Calu3 (cell line): ENCODE measurements at regions of chr16 and their contacts with region 1.

Region 1: DNA sequence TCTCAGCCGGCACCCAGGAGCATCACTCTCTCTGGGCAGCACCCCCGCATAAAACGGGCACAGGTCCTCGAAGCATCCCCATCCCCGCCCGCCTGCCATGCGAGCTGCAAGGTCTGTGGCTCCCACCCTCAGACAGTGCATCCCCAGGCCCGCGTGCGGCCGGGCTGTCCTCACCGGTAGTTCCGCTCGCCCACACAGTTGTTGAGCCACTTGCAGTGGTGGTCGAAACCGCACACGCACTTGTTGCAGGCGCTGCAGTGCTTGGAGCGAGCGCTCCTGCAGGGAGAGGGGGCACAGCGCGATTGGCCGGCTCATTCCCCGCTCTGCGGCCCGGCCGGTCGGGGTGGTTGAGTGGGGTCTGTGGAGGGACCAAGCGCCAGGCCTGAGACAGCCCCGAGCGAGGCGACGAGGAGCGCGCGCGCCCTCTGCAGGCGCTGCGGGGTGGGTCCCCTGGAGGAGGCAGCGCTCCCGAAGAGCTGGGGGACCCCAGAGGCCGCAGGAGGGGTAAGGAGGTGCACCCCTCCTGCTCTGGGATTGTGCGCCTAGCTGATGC is 6.0 kb upstream of the TPPP3 start:
- DNase-seq: peak; percentile 83
- H3K4me3 Mint-ChIP-seq: no peak overlapping the region
- H3K27ac Mint-ChIP-seq: no peak overlapping the region
- H3K4me1 Mint-ChIP-seq: peaks cover 35% of the 10 kb centered on the region
- H3K27me3 Mint-ChIP-seq: no peaks in the 10 kb centered on the region
- CTCF ChIP-seq: peak; percentile 94

Region 2: DNA sequence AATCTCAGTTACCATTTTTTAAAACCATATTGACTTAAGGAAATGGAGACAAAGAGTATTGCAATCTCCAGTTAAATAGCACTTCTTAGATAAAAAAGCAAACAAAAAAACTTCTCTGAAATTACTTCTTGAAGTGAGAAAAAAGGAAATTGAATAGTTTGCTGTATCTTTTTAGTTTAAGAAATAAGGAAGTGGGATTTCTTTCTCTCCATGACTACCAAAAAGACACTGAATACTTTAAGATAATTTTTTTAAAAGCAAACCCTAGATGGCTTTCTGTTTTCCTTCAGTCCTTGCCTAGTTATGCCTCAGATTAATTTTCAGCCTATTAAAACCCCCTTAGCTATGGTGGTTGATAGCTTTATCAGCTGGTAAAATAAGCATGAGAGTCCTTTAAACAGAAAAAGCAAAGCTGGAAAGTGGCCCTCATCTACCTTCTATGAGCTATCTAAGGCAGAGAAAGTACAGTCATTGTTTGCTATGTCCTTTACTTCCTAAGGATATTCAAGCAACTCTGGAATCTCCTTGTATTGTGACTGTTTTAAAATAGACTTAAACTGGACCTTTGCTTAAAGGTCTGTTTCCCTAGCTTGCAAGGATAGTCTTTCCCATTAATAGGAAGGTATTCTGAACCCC is 34.5 kb before region 1 on chr16:
- CTCF ChIA-PET with region 1: no interaction called
- intact Hi-C with region 1: loop called (anchors 5 kb)
- DNase-seq: no peak
- H3K4me3 Mint-ChIP-seq: no peak overlapping the region
- H3K27ac Mint-ChIP-seq: peak overlapping the region; percentile 78
- H3K4me1 Mint-ChIP-seq: peaks cover 43% of the 10 kb centered on the region
- H3K27me3 Mint-ChIP-seq: no peaks in the 10 kb centered on the region
- CTCF ChIP-seq: no peak

Region 3: DNA sequence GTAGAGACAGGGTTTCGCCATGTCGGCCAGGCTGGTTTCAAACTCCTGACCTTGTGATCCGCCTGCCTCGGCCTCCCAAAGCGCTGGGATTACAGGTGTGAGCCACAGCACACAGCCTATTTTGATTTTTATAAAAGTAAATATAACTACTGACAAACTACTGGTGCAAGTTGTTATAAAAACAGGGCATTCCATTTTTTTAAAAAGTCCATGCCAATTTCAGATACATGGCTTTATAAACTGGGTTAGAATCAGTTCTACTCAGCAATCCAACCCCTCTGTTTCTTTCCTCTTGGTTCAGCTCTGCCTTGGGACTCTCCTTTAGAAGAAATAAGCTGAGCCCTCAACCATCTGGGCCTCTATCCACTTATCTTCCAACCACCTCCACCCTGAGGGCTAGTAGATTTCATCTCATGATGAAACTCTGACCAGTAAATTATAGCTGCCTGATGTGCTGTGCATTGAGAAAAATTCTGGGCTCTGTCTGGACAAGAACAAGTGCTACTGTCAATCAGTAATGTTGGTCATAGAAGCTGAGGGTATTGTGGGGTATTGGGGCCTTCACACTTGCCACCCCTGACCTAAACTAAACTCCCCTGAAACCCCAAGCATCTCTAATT is 397.0 kb after region 1 on chr16:
- CTCF ChIA-PET with region 1: no interaction called
- intact Hi-C with region 1: no loop called
- DNase-seq: no peak
- H3K4me3 Mint-ChIP-seq: no peak overlapping the region
- H3K27ac Mint-ChIP-seq: no peak overlapping the region
- H3K4me1 Mint-ChIP-seq: no peaks in the 10 kb centered on the region
- H3K27me3 Mint-ChIP-seq: no peaks in the 10 kb centered on the region
- CTCF ChIP-seq: no peak